A549 (cell line): ENCODE measurements at regions of chr10 and their contacts with region 1.

Region 1: GRCh38 chr10:6401562-6402348 is 178.3 kb downstream of the PRKCQ start:
- DNase-seq: peak; percentile 96 to 97
- ATAC-seq: peak; percentile 90
- H3K4me3 ChIP-seq: peak overlapping the region; percentile 25; the same call in 1 of the 3 replicates
- H3K27ac ChIP-seq: peak overlapping the region; percentile 91 to 96
- H3K4me1 ChIP-seq: peaks cover 72% of the 10 kb centered on the region
- CTCF ChIP-seq: peak; percentile 89
- EP300 ChIP-seq: peak; percentile 43 to 66; a peak in 2 of 5 replicates
- POLR2A ChIP-seq: no peak
- RAD21 ChIP-seq: peak; percentile 99

Region 2: GRCh38 chr10:6119423-6119822 is 282.3 kb before region 1 on chr10:
- CTCF ChIA-PET with region 1: interaction called, 10 read pairs
- POLR2A ChIA-PET with region 1: interaction called, 4 read pairs
- DNase-seq: no peak
- ATAC-seq: no peak; a peak in 1 of 6 replicates
- H3K4me3 ChIP-seq: no peak overlapping the region
- H3K27ac ChIP-seq: no peak overlapping the region
- H3K4me1 ChIP-seq: peaks cover 15% of the 10 kb centered on the region
- CTCF ChIP-seq: no peak
- EP300 ChIP-seq: no peak
- POLR2A ChIP-seq: no peak
- RAD21 ChIP-seq: no peak

Region 3: DNA sequence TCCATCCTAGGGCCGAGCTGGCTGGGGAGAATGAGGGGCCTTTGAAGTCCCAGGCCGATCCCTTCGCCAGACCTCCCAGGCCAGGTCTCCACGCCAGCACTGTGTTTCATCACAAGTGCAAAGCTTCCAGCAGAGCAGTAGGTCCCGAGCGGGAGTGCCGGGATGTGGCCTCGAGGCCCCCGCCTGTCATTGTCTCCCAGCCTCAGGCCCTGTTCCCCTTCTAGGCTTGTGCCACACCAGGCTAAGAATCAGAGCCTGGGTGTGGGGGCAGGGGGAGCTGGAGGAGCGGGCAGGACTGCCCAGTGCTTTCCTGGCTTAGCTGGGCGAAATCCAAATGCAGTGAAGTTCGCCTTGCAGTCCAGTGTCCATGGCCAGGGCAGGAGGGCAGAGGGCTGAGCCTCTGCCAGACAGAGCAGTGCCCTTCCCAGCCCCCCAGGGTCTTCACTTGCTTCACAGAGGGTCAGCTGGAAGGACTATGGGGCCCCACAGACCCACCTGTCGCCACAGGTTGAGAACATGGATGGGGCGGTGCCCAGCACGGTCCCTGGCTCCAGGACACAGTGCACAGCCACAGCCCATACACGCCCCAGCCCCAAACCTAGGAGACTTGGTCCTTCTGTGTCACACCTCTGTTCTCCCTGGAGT is 219.2 kb before region 1 on chr10:
- CTCF ChIA-PET with region 1: interaction called, 14 read pairs
- POLR2A ChIA-PET with region 1: no interaction called
- DNase-seq: no peak
- ATAC-seq: peak; percentile 43 to 53; a peak in 3 of 6 replicates
- H3K4me3 ChIP-seq: no peak overlapping the region
- H3K27ac ChIP-seq: peak overlapping the region in 1 of 2 experiments; percentile 14; a peak in 1 of 6 replicates
- H3K4me1 ChIP-seq: 0 out of 3 replicates have a peak, but pooled peaks cover 5% of the 10 kb centered on the region
- CTCF ChIP-seq: no peak
- EP300 ChIP-seq: no peak
- POLR2A ChIP-seq: no peak
- RAD21 ChIP-seq: no peak

Region 4: DNA sequence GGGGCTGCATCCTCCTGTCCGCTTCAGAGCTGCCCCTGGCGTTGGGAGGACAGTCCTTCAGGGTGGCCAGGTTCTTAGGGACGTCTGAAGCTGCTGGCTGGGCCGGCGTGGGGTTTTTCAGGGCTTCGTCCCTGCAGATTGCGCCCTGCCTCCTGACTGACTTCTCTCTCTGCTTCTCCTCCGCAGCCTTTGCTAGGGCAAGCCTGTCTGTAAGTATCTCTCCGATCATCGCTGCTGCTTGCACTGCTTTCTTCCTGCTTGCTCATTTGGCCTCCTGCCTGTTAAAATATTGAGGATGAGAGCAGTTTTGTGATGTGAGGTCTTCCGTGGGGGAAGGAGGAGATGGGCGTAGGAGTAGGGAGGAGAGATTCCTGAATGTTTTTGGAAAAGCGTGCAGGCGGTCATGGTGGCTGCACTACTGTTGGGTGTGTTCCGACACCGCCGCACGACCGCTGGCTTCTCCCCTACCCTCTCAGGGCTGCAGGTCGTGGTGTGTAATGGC is 173.7 kb before region 1 on chr10:
- CTCF ChIA-PET with region 1: interaction called, 19 read pairs
- POLR2A ChIA-PET with region 1: no interaction called
- DNase-seq: no peak
- ATAC-seq: no peak; a peak in 1 of 6 replicates
- H3K4me3 ChIP-seq: no peak overlapping the region
- H3K27ac ChIP-seq: peak overlapping the region; percentile 24 to 82; a peak in 4 of 6 replicates
- H3K4me1 ChIP-seq: peaks cover 96% of the 10 kb centered on the region
- CTCF ChIP-seq: no peak
- EP300 ChIP-seq: no peak
- POLR2A ChIP-seq: no peak
- RAD21 ChIP-seq: no peak

Region 5: GRCh38 chr10:6282454-6282958 is 119.2 kb before region 1 on chr10:
- CTCF ChIA-PET with region 1: interaction called, 11 read pairs
- POLR2A ChIA-PET with region 1: interaction called, 6 read pairs
- DNase-seq: no peak
- ATAC-seq: no peak
- H3K4me3 ChIP-seq: no peak overlapping the region
- H3K27ac ChIP-seq: peak overlapping the region; percentile 98 to 100
- H3K4me1 ChIP-seq: peaks cover 45% of the 10 kb centered on the region
- CTCF ChIP-seq: no peak
- EP300 ChIP-seq: no peak
- POLR2A ChIP-seq: no peak
- RAD21 ChIP-seq: no peak

Region 6: DNA sequence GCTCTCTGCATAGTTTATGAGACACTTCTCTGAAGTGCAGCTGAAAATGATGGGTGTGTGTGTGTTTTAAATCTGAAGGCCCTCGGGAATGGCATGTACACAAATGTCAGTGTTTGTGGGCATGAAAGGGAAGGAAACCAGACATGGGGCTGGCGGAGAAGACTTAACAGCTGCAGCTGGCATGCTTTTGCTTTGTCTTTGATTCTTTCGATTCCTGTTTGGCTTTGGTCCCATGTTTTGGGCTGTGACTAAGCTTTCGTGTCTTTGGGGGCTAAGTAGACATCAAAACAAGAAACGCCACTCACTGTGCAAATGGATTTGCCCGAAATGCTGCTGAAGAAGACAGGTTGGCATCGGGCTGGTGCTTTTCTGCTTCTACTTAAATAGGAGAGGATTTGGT is 19.7 kb before region 1 on chr10:
- CTCF ChIA-PET with region 1: interaction called, 12 read pairs
- POLR2A ChIA-PET with region 1: no interaction called
- DNase-seq: no peak
- ATAC-seq: no peak
- H3K4me3 ChIP-seq: no peak overlapping the region
- H3K27ac ChIP-seq: peak overlapping the region in 1 of 2 experiments; percentile 44; a peak in 1 of 6 replicates
- H3K4me1 ChIP-seq: peaks cover 19% of the 10 kb centered on the region; the same call in 2 of the 3 replicates
- CTCF ChIP-seq: no peak
- EP300 ChIP-seq: no peak
- POLR2A ChIP-seq: no peak
- RAD21 ChIP-seq: no peak